A673 (cell line): ENCODE measurements at regions of chr10 and their contacts with region 1.

Region 1: DNA sequence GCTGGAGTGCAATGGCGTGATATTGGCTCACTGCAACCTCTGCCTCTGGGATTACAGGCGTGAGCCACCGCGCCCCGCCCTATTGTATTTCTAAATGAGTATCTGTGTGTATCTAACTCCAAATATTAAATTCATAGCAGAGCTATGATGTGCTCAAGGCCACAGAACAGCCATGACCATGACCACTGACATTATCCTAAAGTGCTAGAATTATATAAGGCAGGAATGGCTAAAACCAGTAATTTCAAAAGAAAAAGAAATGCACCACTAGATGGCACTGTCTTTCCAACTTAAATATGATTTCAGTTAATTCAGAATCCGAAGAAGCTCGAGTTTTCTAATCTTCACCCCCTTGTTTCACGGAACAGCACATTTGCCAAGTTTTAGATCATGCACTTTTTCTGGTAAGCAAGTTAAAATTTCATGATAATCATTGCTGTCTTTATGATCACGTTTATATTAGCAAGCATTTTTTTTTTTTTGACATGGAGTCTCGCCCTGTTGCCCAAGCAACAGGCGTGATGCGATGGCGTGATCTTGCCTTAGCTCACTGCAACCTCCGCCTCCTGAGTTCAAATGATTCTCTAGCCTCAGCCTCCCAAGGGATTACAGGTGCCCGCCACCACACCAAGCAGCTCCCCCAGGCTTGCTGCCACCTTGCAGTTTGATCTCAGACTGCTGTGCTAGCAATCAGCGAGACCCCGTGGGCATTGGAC is 65.3 kb downstream of the OR13A1 start:
- DNase-seq: peak; percentile 83
- H3K4me3 ChIP-seq: peak overlapping the region; percentile 29
- H3K27ac ChIP-seq: no peak overlapping the region
- H3K4me1 ChIP-seq: no peaks in the 10 kb centered on the region
- H3K27me3 ChIP-seq: no peaks in the 10 kb centered on the region
- CTCF ChIP-seq: peak; percentile 72

Region 2: GRCh38 chr10:45672181-45673073 is 422.3 kb after region 1 on chr10 and contains the start of gene ZFAND4:
- CTCF ChIA-PET with region 1: no interaction called
- POLR2A ChIA-PET with region 1: no interaction called
- intact Hi-C with region 1: loop called (anchors 10 kb)
- DNase-seq: peak; percentile 97
- H3K4me3 ChIP-seq: peak within 1 kb of the TSS; percentile 76
- H3K27ac ChIP-seq: peak within 1 kb of the TSS; percentile 34
- H3K4me1 ChIP-seq: no peaks in the 10 kb centered on the region
- H3K27me3 ChIP-seq: no peaks in the 10 kb centered on the region
- CTCF ChIP-seq: 0 out of 2 replicates have a peak, but pooled peaks have one; percentile 23
- total RNA-seq, gene ZFAND4: 9.2 and 10.5 TPM in 2 replicates

Region 3: DNA sequence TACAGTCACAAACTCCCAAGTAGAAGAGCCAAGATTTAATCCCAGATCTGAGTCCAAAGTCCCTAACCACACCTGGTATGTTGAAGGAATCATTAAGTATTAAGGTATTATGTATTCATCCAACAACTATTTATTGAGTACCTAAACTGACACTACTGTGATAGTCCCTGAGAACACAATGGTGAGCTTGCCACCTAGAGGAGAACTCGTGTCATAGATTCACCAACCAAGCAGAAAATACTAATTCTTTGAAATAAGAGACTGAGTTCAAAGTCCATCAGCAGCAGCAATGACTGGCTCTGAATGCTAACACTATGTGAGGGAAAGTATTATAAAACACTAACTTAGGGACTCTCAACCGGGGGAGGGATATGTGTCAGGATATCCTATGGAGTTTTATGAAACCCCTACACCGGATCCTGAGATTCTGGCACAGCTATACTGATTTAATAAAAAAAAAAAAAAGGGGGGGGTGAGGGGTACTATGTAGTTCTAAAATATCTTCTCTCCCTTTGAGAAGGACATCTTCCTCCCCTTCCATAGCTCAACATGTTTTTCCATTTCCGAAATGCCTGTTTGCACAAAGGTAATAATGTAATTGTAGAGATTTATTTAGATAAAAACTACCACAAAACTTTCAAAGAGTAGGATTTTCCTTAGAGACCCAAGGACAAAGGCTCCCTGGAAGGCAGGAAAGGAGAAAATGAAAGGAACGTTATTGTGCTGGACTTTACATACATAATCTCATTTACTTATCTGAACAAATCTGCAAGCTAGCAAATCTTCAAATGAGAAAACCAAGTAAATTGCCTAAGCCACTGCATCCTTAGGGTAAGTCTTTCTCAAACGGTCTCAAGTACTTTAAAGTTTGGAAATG is 778.7 kb after region 1 on chr10:
- CTCF ChIA-PET with region 1: interaction called, 4 read pairs
- POLR2A ChIA-PET with region 1: no interaction called
- intact Hi-C with region 1: loop called (anchors 5 kb)
- DNase-seq: peak; percentile 79
- H3K4me3 ChIP-seq: peak overlapping the region; percentile 91
- H3K27ac ChIP-seq: peak overlapping the region; percentile 85
- H3K4me1 ChIP-seq: peaks cover 14% of the 10 kb centered on the region
- H3K27me3 ChIP-seq: no peaks in the 10 kb centered on the region
- CTCF ChIP-seq: peak; percentile 75